GM12878 (cell line): ENCODE measurements at regions of chr17 and their contacts with region 1.

Region 1: DNA sequence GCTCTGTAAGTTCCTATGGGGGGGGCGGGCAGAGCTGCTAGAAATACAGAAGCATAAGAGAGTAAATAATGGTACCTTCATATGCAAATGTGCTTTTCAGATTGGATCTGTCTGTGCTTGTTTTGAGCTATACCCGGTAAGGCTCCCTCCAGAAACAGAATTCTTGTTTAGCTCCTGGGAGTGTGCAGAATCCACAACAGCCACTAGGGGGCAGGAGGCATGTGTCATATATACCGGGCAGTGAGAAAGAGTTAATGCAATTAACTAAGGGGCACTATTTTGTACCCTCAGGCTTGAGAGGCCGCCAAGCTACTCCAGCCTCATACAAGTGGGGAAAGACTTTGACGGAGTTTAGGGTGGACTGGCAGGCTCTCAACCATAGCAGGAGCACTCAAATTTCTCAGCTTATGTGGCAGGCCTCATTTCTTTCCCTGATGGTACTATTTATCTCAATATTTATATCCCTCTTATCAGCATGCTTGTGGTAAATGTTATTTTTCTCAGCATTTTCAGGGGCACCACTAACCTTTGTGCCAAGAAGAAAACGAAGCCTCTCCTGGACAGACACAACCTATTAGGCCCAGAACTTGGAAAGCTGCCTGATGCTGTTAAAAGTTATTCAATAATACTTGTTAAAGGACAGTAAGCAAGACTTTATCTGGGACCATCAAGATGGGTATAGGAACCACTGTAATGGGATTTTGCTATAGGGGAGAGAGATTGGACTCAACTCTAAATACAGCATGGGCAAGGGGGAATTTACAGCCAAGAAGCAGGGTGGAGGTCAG is 10.7 kb upstream of the CENPV start:
- DNase-seq: peak; percentile 61
- ATAC-seq: peak; percentile 99
- H3K4me3 ChIP-seq: no peak overlapping the region
- H3K27ac ChIP-seq: no peak overlapping the region
- H3K4me1 ChIP-seq: peaks cover 3% of the 10 kb centered on the region; the same call in 1 of the 2 replicates
- H3K27me3 ChIP-seq: no peaks in the 10 kb centered on the region
- CTCF ChIP-seq: peak; percentile 89 to 96 (median 95)
- EP300 ChIP-seq: no peak
- POLR2A ChIP-seq: no peak
- RAD21 ChIP-seq: peak; percentile 93

Region 2: DNA sequence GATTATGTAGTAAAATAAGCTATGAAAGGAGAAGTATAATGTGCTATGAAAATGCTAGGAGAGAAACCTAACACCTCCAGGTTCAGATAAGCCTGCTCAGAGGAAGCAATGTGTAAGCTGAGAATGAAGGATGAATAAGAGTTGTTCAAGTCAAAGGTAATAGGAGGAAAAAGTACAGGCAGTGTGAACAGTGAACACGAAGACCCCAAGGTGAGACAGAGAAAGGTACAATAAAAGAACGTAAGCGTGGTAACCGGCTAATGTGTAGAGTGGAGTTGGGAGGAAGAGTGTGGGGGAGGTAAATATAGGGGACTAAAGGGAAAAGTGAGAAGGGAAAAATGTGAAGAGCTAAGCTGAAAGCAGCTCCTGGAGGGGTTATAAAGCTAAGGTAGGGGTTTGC is 290.1 kb before region 1 on chr17:
- CTCF ChIA-PET with region 1: no interaction called
- POLR2A ChIA-PET with region 1: no interaction called
- RAD21 ChIA-PET with region 1: no interaction called
- SMC1A ChIA-PET with region 1: no interaction called
- in situ Hi-C with region 1: no loop called
- intact Hi-C with region 1: no loop called
- DNase-seq: no peak
- ATAC-seq: no peak
- H3K4me3 ChIP-seq: no peak overlapping the region
- H3K27ac ChIP-seq: no peak overlapping the region
- H3K4me1 ChIP-seq: no peaks in the 10 kb centered on the region
- H3K27me3 ChIP-seq: no peaks in the 10 kb centered on the region
- CTCF ChIP-seq: no peak
- EP300 ChIP-seq: no peak
- POLR2A ChIP-seq: no peak
- RAD21 ChIP-seq: no peak

Region 3: DNA sequence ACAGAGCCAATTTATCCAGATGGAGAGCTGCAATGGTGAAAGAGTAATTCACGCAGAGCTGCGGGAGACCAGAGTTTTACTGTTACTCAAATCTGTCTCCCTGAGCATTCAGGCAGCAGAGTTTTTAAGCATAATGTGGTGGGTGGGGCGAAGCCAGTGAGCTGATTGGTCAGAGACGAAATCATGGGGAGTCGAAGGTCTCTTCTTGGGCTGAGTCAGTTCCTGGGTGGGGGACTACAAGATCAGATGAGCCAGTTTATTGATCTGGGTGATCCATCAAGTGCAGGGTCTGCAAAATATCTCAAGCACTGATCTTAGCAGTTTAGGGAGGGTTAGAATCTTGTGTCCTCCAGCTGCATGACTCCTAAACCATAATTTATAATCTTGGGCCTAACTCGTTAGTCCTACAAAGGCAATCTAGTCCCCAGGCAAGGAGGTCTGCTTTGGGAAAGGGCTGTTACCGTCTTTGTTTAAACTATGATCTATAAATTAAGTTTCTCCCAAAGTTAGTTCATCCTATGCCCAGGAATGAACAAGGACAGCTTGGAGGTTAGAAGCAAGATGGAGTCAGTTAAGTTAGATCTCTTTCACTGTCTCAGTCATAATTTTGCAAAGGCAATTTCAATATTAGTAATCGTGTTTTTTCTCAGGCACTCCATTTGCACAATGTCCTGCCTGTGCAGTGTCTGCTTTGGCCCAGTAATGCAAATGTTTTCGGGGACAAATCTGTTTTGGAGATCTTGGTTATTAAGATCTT is 120.0 kb before region 1 on chr17:
- CTCF ChIA-PET with region 1: no interaction called
- POLR2A ChIA-PET with region 1: no interaction called
- RAD21 ChIA-PET with region 1: no interaction called
- SMC1A ChIA-PET with region 1: no interaction called
- in situ Hi-C with region 1: no loop called
- intact Hi-C with region 1: no loop called
- DNase-seq: no peak
- ATAC-seq: no peak
- H3K4me3 ChIP-seq: no peak overlapping the region
- H3K27ac ChIP-seq: no peak overlapping the region
- H3K4me1 ChIP-seq: peaks cover 6% of the 10 kb centered on the region
- H3K27me3 ChIP-seq: no peaks in the 10 kb centered on the region
- CTCF ChIP-seq: no peak
- EP300 ChIP-seq: no peak
- POLR2A ChIP-seq: no peak
- RAD21 ChIP-seq: no peak

Region 4: GRCh38 chr17:16353317-16354174 is 10.4 kb before region 1 on chr17 and contains the start of gene CENPV:
- CTCF ChIA-PET with region 1: interaction called, 88 read pairs
- POLR2A ChIA-PET with region 1: interaction called, 3 read pairs
- RAD21 ChIA-PET with region 1: interaction called, 15 read pairs
- SMC1A ChIA-PET with region 1: interaction called, 16 read pairs
- in situ Hi-C with region 1: no loop called
- intact Hi-C with region 1: no loop called
- DNase-seq: no peak
- ATAC-seq: peak; percentile 75
- H3K4me3 ChIP-seq: peak within 1 kb of the TSS; percentile 83
- H3K27ac ChIP-seq: peak within 1 kb of the TSS; percentile 61
- H3K4me1 ChIP-seq: peaks cover 3% of the 10 kb centered on the region; the same call in 1 of the 2 replicates
- H3K27me3 ChIP-seq: no peaks in the 10 kb centered on the region
- CTCF ChIP-seq: peak in 1 of 3 experiments; percentile 36; a peak in 2 of 6 replicates
- EP300 ChIP-seq: no peak
- POLR2A ChIP-seq: peak; percentile 76
- RAD21 ChIP-seq: peak; percentile 11; the same call in 1 of the 2 replicates
- polyA plus RNA-seq, gene CENPV: 22.5 to 68.0 TPM

Region 5: DNA sequence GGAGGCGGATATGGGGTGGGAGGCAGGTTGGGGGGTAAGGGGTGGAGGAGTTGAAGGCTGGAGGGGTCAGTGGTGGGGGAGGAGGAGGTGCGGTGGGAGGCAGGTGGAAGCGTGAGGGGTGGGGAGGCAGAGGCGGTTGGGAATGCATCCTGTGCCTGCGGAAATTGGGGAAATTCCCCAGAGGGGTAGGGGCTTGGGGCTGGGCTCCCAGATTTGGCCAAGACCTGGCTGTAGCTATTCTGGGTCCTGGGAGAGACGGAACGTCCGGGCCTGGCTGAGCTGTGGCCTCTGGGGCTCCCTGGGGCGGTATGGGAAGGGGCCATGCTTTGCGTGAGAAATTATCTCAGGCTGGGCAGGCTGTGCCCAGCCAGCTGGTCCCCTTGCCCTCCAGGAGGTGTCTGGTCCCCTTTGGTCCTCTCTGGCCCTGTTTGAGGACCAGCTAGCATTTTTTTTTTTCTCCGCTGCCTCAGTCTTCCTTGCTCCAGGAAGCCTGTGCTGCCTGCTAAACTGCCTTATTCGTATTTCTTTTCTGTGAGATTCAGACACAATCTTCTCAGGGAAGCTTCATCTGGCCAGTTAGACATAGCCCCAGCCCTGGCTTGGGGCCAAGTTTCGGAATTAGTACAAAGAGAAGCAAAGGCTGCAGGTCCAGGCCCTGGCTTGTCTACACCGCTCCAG is 44.1 kb after region 1 on chr17:
- CTCF ChIA-PET with region 1: interaction called, 33 read pairs
- POLR2A ChIA-PET with region 1: interaction called, 7 read pairs
- RAD21 ChIA-PET with region 1: interaction called, 8 read pairs
- SMC1A ChIA-PET with region 1: interaction called, 22 read pairs
- in situ Hi-C with region 1: no loop called
- intact Hi-C with region 1: no loop called
- DNase-seq: peak; percentile 96
- ATAC-seq: peak; percentile 92
- H3K4me3 ChIP-seq: peak overlapping the region; percentile 37; the same call in 1 of the 2 replicates
- H3K27ac ChIP-seq: peak overlapping the region; percentile 99
- H3K4me1 ChIP-seq: no peaks in the 10 kb centered on the region; the same call in none of the 2 replicates
- H3K27me3 ChIP-seq: no peaks in the 10 kb centered on the region
- CTCF ChIP-seq: no peak
- EP300 ChIP-seq: peak in 1 of 2 experiments; percentile 7; a peak in 1 of 4 replicates
- POLR2A ChIP-seq: no peak; the same call in 1 of the 2 replicates
- RAD21 ChIP-seq: peak; percentile 13; the same call in 1 of the 2 replicates

Region 6: GRCh38 chr17:16438557-16439302 is 74.8 kb after region 1 on chr17:
- CTCF ChIA-PET with region 1: interaction called, 35 read pairs
- POLR2A ChIA-PET with region 1: no interaction called
- RAD21 ChIA-PET with region 1: interaction called, 16 read pairs
- SMC1A ChIA-PET with region 1: interaction called, 23 read pairs
- in situ Hi-C with region 1: no loop called
- intact Hi-C with region 1: no loop called
- DNase-seq: peak; percentile 98
- ATAC-seq: peak; percentile 87
- H3K4me3 ChIP-seq: peak overlapping the region; percentile 97
- H3K27ac ChIP-seq: peak overlapping the region; percentile 79
- H3K4me1 ChIP-seq: peaks cover 15% of the 10 kb centered on the region
- H3K27me3 ChIP-seq: no peaks in the 10 kb centered on the region
- CTCF ChIP-seq: no peak
- EP300 ChIP-seq: peak in 1 of 2 experiments; percentile 28; a peak in 1 of 4 replicates
- POLR2A ChIP-seq: peak; percentile 96
- RAD21 ChIP-seq: no peak

Region 7: GRCh38 chr17:16521070-16521727 is 157.3 kb after region 1 on chr17:
- CTCF ChIA-PET with region 1: interaction called, 152 read pairs
- POLR2A ChIA-PET with region 1: no interaction called
- RAD21 ChIA-PET with region 1: interaction called, 73 read pairs
- SMC1A ChIA-PET with region 1: interaction called, 103 read pairs
- in situ Hi-C with region 1: loop called (anchors 5 kb)
- intact Hi-C with region 1: loop called (anchors 1 kb)
- DNase-seq: peak; percentile 39
- ATAC-seq: peak; percentile 98
- H3K4me3 ChIP-seq: no peak overlapping the region
- H3K27ac ChIP-seq: no peak overlapping the region
- H3K4me1 ChIP-seq: 0 out of 2 replicates have a peak, but pooled peaks cover 2% of the 10 kb centered on the region
- H3K27me3 ChIP-seq: no peaks in the 10 kb centered on the region
- CTCF ChIP-seq: peak; percentile 89 to 97 (median 94)
- EP300 ChIP-seq: no peak
- POLR2A ChIP-seq: no peak
- RAD21 ChIP-seq: peak; percentile 91